Naive thymus-derived CD4-positive, alpha-beta T cell (primary cell): ENCODE measurements at regions of chr2 and their contacts with region 1.

Region 1: GRCh38 chr2:64609227-64609941 is 44.3 kb downstream of the SERTAD2 start:
- DNase-seq: peak; percentile 49 to 85 (median 78)
- ATAC-seq: peak; percentile 81
- H3K4me3 ChIP-seq: peak overlapping the region; percentile 66
- H3K4me3 Mint-ChIP-seq: peak overlapping the region; percentile 61 to 86 (median 72)
- H3K27ac ChIP-seq: peak overlapping the region; percentile 64
- H3K27ac Mint-ChIP-seq: peak overlapping the region in 8 of 9 donors; percentile 51 to 82 (median 66)
- H3K4me1 ChIP-seq: peaks cover 17 to 27% of the 10 kb centered on the region in 2 donors
- H3K4me1 Mint-ChIP-seq: peaks cover 0 to 33% (median 21%) of the 10 kb centered on the region in 7 donors
- H3K27me3 ChIP-seq: no peaks in the 10 kb centered on the region
- H3K27me3 Mint-ChIP-seq: peaks cover 0 to 24% (median 0%) of the 10 kb centered on the region in 5 donors

Region 2: DNA sequence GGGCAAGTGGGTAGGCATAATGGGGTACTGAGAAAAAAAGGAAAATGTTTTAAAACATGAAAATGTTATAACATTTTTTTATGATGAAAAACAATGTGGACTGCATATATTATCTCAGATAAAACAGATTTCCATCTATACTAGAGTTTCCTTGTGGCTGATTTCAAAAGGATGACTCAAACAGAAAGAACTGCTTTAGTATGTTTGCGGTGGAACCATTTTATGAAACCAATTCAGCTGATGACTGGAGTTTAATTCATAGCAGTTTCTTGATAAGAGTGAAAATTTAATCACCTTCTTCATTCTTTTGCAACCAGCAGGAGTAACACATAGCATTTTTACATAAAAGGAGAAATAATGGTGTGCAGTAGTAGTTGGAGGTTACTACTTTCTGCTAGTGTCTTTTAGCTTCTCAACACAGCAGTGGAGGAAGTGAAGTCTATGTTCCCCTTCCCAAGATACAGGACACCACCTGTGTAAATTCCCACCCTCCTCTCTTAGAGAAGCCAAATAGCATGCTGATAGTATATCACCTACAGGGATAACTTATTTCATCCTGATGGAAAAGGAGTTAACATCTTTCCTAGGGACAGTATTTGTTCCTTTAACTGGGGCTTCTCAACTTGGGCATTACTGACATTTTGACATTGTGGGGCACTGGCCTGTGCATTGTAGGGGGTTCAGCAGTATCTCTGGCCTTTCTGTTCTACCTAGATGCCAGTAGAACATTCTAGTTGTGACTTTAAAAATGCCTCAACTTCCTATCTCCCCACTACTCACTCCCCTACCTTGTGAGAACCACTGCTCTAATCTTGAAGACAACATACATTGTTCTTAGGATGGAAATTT is 495.1 kb before region 1 on chr2:
- CTCF ChIA-PET with region 1: no interaction called
- POLR2A ChIA-PET with region 1: no interaction called
- intact Hi-C with region 1: loop called in 1 of 2 experiments (anchors 5 kb)
- DNase-seq: peak in 5 of 9 donors; percentile 7 to 45 (median 34)
- ATAC-seq: peak; percentile 81
- H3K4me3 ChIP-seq: no peak overlapping the region
- H3K4me3 Mint-ChIP-seq: peak overlapping the region; percentile 12 to 75 (median 66)
- H3K27ac ChIP-seq: no peak overlapping the region
- H3K27ac Mint-ChIP-seq: peak overlapping the region; percentile 12 to 75 (median 60)
- H3K4me1 ChIP-seq: peaks cover 10 to 32% of the 10 kb centered on the region in 2 donors
- H3K4me1 Mint-ChIP-seq: peaks cover 55 to 94% (median 85%) of the 10 kb centered on the region in 7 donors
- H3K27me3 ChIP-seq: no peaks in the 10 kb centered on the region
- H3K27me3 Mint-ChIP-seq: no peaks in the 10 kb centered on the region

Region 3: DNA sequence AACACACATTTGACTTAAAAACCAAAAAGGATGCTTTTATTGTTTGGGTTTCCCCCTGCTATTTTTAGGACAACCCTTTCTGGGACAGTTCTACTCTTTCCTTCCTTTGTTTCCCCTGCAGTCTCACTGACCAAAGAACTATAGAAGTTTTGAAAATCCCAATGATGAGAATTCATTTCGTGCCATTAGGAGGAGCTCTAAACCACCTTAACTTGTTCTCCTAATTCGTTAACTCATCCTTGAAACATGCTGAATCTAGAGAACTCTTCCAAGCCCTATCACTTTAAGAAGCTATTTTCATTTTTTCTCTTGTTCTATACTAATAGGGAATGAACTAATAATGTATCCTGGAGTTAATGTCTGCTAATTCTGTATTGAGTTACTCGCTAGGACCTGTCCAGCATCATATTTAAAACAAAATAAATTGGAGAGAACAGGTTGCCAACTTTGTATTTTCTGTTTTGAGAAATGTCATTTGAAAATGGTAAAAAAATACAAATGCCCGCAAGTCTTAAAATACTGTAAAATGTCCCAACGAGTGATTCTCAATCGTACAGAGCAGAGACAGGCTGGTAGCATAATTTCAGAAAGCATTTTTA is 22.4 kb before region 1 on chr2:
- CTCF ChIA-PET with region 1: no interaction called
- POLR2A ChIA-PET with region 1: no interaction called
- intact Hi-C with region 1: loop called (anchors 2 kb)
- DNase-seq: peak in 6 of 9 donors; percentile 30 to 55 (median 42)
- ATAC-seq: peak; percentile 72
- H3K4me3 ChIP-seq: no peak overlapping the region
- H3K4me3 Mint-ChIP-seq: no peak overlapping the region
- H3K27ac ChIP-seq: no peak overlapping the region
- H3K27ac Mint-ChIP-seq: peak overlapping the region in 1 of 9 donors; percentile 64
- H3K4me1 ChIP-seq: no peaks in the 10 kb centered on the region
- H3K4me1 Mint-ChIP-seq: peaks cover 0 to 14% (median 5%) of the 10 kb centered on the region in 7 donors
- H3K27me3 ChIP-seq: no peaks in the 10 kb centered on the region
- H3K27me3 Mint-ChIP-seq: no peaks in the 10 kb centered on the region

Region 4: GRCh38 chr2:64767670-64768468 is 158.5 kb after region 1 on chr2:
- CTCF ChIA-PET with region 1: no interaction called
- POLR2A ChIA-PET with region 1: interaction called, 4 read pairs
- intact Hi-C with region 1: loop called (anchors 1 kb)
- DNase-seq: peak; percentile 35 to 78 (median 55)
- ATAC-seq: peak; percentile 89
- H3K4me3 ChIP-seq: peak overlapping the region; percentile 80
- H3K4me3 Mint-ChIP-seq: peak overlapping the region; percentile 90 to 99 (median 96)
- H3K27ac ChIP-seq: peak overlapping the region; percentile 73
- H3K27ac Mint-ChIP-seq: peak overlapping the region; percentile 92 to 97 (median 95)
- H3K4me1 ChIP-seq: peaks cover 3 to 12% of the 10 kb centered on the region in 2 donors
- H3K4me1 Mint-ChIP-seq: peaks cover 9 to 40% (median 23%) of the 10 kb centered on the region in 7 donors
- H3K27me3 ChIP-seq: no peaks in the 10 kb centered on the region
- H3K27me3 Mint-ChIP-seq: peaks cover 0 to 15% (median 0%) of the 10 kb centered on the region in 5 donors

Region 5: GRCh38 chr2:64831134-64831976 is 222.0 kb after region 1 on chr2:
- CTCF ChIA-PET with region 1: interaction called, 3 read pairs
- POLR2A ChIA-PET with region 1: interaction called, 4 read pairs
- intact Hi-C with region 1: loop called in 1 of 2 experiments (anchors 2 kb)
- DNase-seq: peak; percentile 61 to 89 (median 78)
- ATAC-seq: peak; percentile 95
- H3K4me3 ChIP-seq: peak overlapping the region; percentile 7
- H3K4me3 Mint-ChIP-seq: peak overlapping the region in 1 of 10 donors; percentile 8
- H3K27ac ChIP-seq: no peak overlapping the region
- H3K27ac Mint-ChIP-seq: peak overlapping the region in 1 of 9 donors; percentile 72
- H3K4me1 ChIP-seq: peaks cover 0 to 9% of the 10 kb centered on the region in 2 donors
- H3K4me1 Mint-ChIP-seq: peaks cover 0 to 25% (median 4%) of the 10 kb centered on the region in 7 donors
- H3K27me3 ChIP-seq: no peaks in the 10 kb centered on the region
- H3K27me3 Mint-ChIP-seq: peaks cover 0 to 9% (median 4%) of the 10 kb centered on the region in 5 donors

Region 6: DNA sequence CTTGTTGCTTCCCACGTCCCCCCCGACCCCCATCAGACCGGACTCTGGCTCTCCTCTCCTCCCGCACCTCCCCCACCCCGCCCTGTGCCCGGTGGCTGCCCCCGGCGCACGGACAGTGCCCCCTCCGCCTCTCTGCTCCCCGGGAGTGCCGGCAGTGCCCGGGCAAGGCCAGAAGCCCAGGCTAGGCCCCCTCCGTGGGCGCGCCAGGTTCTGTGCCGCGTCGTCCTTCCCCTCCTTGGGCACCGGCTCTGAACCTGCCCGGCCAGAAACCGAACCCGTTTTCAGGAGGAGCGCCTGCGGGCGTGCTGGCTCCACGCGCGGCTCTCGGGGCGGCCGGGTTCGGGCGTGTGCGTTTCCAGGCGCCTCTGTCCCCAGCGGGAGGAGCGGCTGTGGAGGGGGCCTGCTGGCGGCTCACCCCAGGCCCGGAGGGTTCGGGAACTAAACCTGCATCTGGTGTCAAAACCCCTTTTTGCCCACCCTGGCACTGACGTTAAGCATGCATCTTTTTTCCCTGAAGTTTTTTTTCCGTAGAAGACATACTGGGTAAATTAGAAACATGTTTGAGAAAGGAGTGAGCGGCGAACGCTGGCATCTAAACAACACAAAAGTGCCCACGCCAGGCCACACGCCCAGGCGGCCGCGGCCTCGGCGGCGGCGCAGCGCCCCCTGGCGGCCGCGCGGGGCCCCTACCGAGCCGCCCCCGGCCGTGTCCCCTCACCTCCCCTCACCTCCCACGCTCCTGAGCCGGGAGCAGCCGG is 255.9 kb after region 1 on chr2:
- CTCF ChIA-PET with region 1: interaction called, 5 read pairs
- POLR2A ChIA-PET with region 1: no interaction called
- intact Hi-C with region 1: loop called (anchors 1 kb)
- DNase-seq: peak; percentile 30 to 82 (median 72)
- ATAC-seq: peak; percentile 87
- H3K4me3 ChIP-seq: peak overlapping the region; percentile 88
- H3K4me3 Mint-ChIP-seq: peak overlapping the region in 7 of 10 donors; percentile 72 to 86 (median 81)
- H3K27ac ChIP-seq: peak overlapping the region; percentile 40
- H3K27ac Mint-ChIP-seq: no peak overlapping the region
- H3K4me1 ChIP-seq: peaks cover 0 to 5% of the 10 kb centered on the region in 2 donors
- H3K4me1 Mint-ChIP-seq: peaks cover 0 to 5% (median 0%) of the 10 kb centered on the region in 7 donors
- H3K27me3 ChIP-seq: peaks cover 0 to 3% of the 10 kb centered on the region in 2 donors
- H3K27me3 Mint-ChIP-seq: peaks cover 0 to 17% (median 8%) of the 10 kb centered on the region in 5 donors

Region 7: DNA sequence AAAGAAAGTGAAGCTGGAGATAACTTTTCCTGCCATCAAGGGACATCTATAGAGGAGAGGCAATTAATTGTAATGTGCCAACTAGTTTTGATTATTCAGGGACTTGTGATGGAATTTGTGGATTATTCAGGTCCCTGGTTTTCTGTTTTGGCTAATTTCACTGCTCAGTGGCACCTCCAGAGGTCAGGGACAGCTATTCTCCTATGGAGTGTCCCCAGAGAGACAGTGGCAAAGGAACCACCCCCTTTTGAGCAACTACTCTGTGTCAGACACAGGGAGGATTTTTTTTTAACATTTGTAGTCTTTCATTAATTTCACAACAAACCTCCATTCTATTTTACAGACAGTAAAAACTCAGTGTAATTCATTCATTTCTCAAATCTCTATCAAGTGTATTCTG is 1029.1 kb after region 1 on chr2:
- CTCF ChIA-PET with region 1: no interaction called
- POLR2A ChIA-PET with region 1: no interaction called
- intact Hi-C with region 1: no loop called
- DNase-seq: no peak
- ATAC-seq: no peak
- H3K4me3 ChIP-seq: no peak overlapping the region
- H3K4me3 Mint-ChIP-seq: no peak overlapping the region
- H3K27ac ChIP-seq: no peak overlapping the region
- H3K27ac Mint-ChIP-seq: no peak overlapping the region
- H3K4me1 ChIP-seq: no peaks in the 10 kb centered on the region
- H3K4me1 Mint-ChIP-seq: peaks cover 0 to 5% (median 2%) of the 10 kb centered on the region in 7 donors
- H3K27me3 ChIP-seq: no peaks in the 10 kb centered on the region
- H3K27me3 Mint-ChIP-seq: peaks cover 9 to 28% (median 15%) of the 10 kb centered on the region in 5 donors